Activated T-helper 1 cell treated with anti-CD3 and anti-CD28 coated beads, Interleukin-12 subunit alpha, Interleukin-12 subunit beta, Interleukin-2, Interleukin-4 antibody, amounts not matched to agents 30 ng/mL and 10 ng/mL and 1 ng/mL, durations not matched to agents 14 hours and 24 hours and 36 hours (primary cell): ENCODE measurements at regions of chr13 and their contacts with region 1.

Region 1: GRCh38 chr13:44917589-44918325 is 71.5 kb downstream of the NUFIP1 start:
- DNase-seq: peak; percentile 94
- H3K4me3 Mint-ChIP-seq: no peak overlapping the region
- H3K27ac Mint-ChIP-seq: no peak overlapping the region
- H3K4me1 Mint-ChIP-seq: no peaks in the 10 kb centered on the region
- H3K27me3 Mint-ChIP-seq: no peaks in the 10 kb centered on the region

Region 2: GRCh38 chr13:43629691-43630480 is 1287.9 kb before region 1 on chr13:
- intact Hi-C with region 1: no loop called
- DNase-seq: no peak
- H3K4me3 Mint-ChIP-seq: no peak overlapping the region
- H3K27ac Mint-ChIP-seq: no peak overlapping the region
- H3K4me1 Mint-ChIP-seq: no peaks in the 10 kb centered on the region
- H3K27me3 Mint-ChIP-seq: peaks cover 9% of the 10 kb centered on the region

Region 3: DNA sequence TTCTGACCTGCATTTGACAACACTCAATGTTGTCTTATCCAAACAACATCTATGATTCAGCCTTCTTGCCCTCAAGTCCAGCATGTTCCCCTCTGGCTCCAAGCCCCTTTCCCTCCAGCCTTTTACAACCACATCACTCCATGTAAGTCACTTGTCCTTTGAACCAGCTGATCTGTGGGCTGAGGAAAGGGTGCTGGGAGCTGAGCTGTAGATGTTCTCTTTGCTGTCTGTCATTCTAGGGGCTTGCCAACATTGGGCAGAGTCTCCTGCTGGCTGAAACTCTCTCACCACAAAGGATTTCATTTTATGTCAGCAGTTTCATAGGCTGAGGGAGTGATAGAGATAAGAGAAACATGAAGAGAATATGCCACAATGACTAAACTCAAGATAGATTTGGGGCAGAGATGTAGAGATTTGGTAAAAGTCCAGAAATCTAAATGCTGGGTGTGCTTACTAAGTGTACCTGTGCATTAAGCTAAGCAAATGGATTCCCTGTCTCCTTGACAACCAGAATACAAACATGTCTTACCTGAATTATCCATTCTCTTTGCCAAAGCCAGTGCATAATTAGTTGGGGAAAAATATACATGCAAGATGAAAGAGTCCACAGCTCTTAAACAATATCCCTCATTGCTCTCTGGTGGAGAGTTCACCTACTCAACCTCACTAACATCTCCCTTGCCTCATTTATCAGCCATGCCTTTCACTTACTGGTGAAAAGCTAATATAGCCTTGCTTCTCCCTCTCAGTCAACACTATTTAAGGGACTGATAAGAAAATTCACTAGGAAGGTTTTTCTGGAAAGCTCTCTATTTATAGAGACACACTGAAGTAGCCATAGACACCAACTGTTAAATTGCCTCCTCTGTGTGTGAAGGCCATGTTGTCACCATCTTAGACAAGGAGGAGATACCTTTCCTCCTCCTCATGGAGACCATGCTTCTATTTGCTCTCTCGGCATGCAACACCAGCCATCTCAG is 719.7 kb before region 1 on chr13:
- intact Hi-C with region 1: loop called (anchors 5 kb)
- DNase-seq: peak; percentile 50
- H3K4me3 Mint-ChIP-seq: no peak overlapping the region
- H3K27ac Mint-ChIP-seq: peak overlapping the region; percentile 37
- H3K4me1 Mint-ChIP-seq: peaks cover 47% of the 10 kb centered on the region
- H3K27me3 Mint-ChIP-seq: peaks cover 32% of the 10 kb centered on the region

Region 4: GRCh38 chr13:44577236-44578066 is 340.3 kb before region 1 on chr13:
- intact Hi-C with region 1: loop called (anchors 1 kb)
- DNase-seq: peak; percentile 88
- H3K4me3 Mint-ChIP-seq: peak overlapping the region; percentile 92
- H3K27ac Mint-ChIP-seq: peak overlapping the region; percentile 86
- H3K4me1 Mint-ChIP-seq: peaks cover 36% of the 10 kb centered on the region
- H3K27me3 Mint-ChIP-seq: peaks cover 41% of the 10 kb centered on the region

Region 5: GRCh38 chr13:44815623-44816022 is 102.1 kb before region 1 on chr13:
- intact Hi-C with region 1: loop called (anchors 1 kb)
- DNase-seq: peak; percentile 10
- H3K4me3 Mint-ChIP-seq: no peak overlapping the region
- H3K27ac Mint-ChIP-seq: peak overlapping the region; percentile 8
- H3K4me1 Mint-ChIP-seq: peaks cover 29% of the 10 kb centered on the region
- H3K27me3 Mint-ChIP-seq: peaks cover 12% of the 10 kb centered on the region

Region 6: DNA sequence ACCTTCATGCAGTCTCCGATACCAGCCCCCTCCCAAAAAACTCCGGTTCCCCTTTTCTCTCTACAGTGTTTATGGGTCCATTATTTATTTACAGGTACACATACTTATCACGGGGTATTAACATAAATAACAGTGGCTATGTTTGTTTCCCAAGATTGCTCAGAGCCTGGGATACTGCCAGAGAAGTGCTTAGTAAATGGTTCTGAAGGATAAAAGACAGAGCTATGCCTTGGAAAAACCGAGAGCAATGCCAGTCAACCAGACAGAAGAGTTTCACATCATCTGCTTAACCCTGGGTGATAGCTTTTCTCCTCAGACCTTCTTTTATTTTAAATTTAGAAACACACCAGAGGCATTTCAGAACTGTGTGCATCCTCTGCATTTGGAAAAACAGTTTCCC is 10.2 kb after region 1 on chr13:
- intact Hi-C with region 1: no loop called
- DNase-seq: no peak
- H3K4me3 Mint-ChIP-seq: no peak overlapping the region
- H3K27ac Mint-ChIP-seq: no peak overlapping the region
- H3K4me1 Mint-ChIP-seq: no peaks in the 10 kb centered on the region
- H3K27me3 Mint-ChIP-seq: peaks cover 33% of the 10 kb centered on the region

Region 7: DNA sequence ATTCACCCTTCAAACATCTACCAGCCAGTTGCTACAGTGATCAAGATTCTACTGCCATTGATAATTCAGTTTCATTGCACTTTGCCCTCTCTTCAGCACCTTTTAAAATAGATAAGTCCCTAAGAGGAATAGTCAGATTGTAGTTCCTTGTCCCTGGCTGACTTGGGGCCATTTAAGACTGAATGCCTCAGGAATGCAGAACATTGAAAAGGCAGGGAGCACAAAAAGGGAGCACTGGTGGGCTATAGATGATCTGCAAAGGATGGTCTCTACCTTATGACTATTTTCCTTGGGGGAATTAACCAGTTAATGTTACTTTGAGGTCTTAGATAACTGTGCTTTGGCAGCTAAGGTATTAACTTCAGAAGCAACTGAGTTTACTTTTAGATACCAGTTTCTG is 118.4 kb after region 1 on chr13:
- intact Hi-C with region 1: no loop called
- DNase-seq: no peak
- H3K4me3 Mint-ChIP-seq: no peak overlapping the region
- H3K27ac Mint-ChIP-seq: no peak overlapping the region
- H3K4me1 Mint-ChIP-seq: peaks cover 4% of the 10 kb centered on the region
- H3K27me3 Mint-ChIP-seq: no peaks in the 10 kb centered on the region

Region 8: GRCh38 chr13:45047394-45048310 is 129.9 kb after region 1 on chr13:
- intact Hi-C with region 1: loop called (anchors 5 kb)
- DNase-seq: peak; percentile 61
- H3K4me3 Mint-ChIP-seq: peak overlapping the region; percentile 76
- H3K27ac Mint-ChIP-seq: no peak overlapping the region
- H3K4me1 Mint-ChIP-seq: peaks cover 16% of the 10 kb centered on the region
- H3K27me3 Mint-ChIP-seq: peaks cover 33% of the 10 kb centered on the region

Region 9: GRCh38 chr13:45393941-45394570 is 476.3 kb after region 1 on chr13:
- intact Hi-C with region 1: loop called (anchors 5 kb)
- DNase-seq: no peak
- H3K4me3 Mint-ChIP-seq: no peak overlapping the region
- H3K27ac Mint-ChIP-seq: no peak overlapping the region
- H3K4me1 Mint-ChIP-seq: peaks cover 51% of the 10 kb centered on the region
- H3K27me3 Mint-ChIP-seq: no peaks in the 10 kb centered on the region